ENCODE measurements at regions of chr13 and their contacts with region 1.

Region 1: DNA sequence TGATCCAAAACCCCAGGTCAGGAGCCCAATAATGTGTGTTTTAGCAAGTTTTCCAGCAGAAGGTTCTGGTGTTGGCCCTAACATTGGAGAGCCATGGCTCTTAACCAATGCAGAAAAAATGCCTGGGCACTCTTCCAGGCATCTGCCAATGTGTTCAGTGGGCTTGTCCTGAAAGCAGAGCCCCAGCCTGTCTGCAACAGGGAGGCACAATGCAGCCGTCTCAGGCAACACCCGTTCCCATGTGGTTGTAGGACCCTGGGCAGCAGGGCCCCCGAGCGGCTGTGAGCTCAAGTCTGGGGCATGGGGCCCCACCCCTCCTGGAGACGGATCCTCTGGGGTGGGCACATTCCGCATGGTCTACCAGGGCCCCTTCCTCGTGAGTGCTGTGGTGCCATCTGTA is 58.1 kb upstream of the SIAH3 start:
- DNase-seq: no peak
- ATAC-seq: no peak
- H3K4me3 ChIP-seq: no peak overlapping the region
- H3K27ac ChIP-seq: no peak overlapping the region
- H3K4me1 ChIP-seq: no peaks in the 10 kb centered on the region
- H3K27me3 ChIP-seq: peaks cover 0 to 8% (median 0%) of the 10 kb centered on the region in 9 donors
- CTCF ChIP-seq: no peak
- POLR2A ChIP-seq: no peak

Region 2: DNA sequence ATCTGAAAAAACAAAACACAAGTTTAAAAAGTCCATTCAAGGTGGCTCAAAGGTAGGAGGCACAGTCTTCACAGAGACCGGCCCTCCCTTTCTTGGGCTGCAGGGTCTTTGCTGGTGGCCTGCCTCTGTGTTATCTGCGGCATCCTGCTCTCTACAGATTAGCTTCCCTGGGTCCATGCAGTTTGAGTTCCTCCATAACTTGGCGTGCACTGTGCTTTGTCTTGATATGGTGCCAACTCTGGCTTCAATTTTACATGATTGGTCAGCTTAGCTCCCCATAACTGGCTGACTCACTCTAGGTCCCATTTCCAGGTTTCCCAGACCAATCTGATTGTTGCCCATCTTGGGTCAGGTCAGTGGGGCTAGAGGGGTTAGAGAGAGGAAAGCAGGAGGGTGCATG is 610.5 kb before region 1 on chr13:
- intact Hi-C with region 1: no loop called
- DNase-seq: no peak
- ATAC-seq: peak in 1 of 4 donors; percentile 14
- H3K4me3 ChIP-seq: no peak overlapping the region
- H3K27ac ChIP-seq: no peak overlapping the region
- H3K4me1 ChIP-seq: peaks cover 0 to 20% (median 1%) of the 10 kb centered on the region in 12 donors
- H3K27me3 ChIP-seq: no peaks in the 10 kb centered on the region
- CTCF ChIP-seq: no peak
- POLR2A ChIP-seq: no peak

Region 3: GRCh38 chr13:45833656-45834375 is 75.9 kb before region 1 on chr13:
- intact Hi-C with region 1: loop called in 1 of 10 experiments (anchors 2 kb)
- DNase-seq: peak in 4 of 5 donors; percentile 52 to 81 (median 59)
- ATAC-seq: peak; percentile 89 to 99 (median 96)
- H3K4me3 ChIP-seq: no peak overlapping the region
- H3K27ac ChIP-seq: no peak overlapping the region
- H3K4me1 ChIP-seq: peaks cover 0 to 11% (median 0%) of the 10 kb centered on the region in 12 donors
- H3K27me3 ChIP-seq: no peaks in the 10 kb centered on the region
- CTCF ChIP-seq: no peak
- POLR2A ChIP-seq: no peak

Region 4: GRCh38 chr13:45950386-45951000 is 40.8 kb after region 1 on chr13:
- intact Hi-C with region 1: no loop called
- DNase-seq: no peak
- ATAC-seq: peak; percentile 24 to 73 (median 46)
- H3K4me3 ChIP-seq: no peak overlapping the region
- H3K27ac ChIP-seq: peak overlapping the region in 4 of 12 donors; percentile 11 to 89 (median 24)
- H3K4me1 ChIP-seq: peaks cover 0 to 17% (median 0%) of the 10 kb centered on the region in 12 donors
- H3K27me3 ChIP-seq: no peaks in the 10 kb centered on the region
- CTCF ChIP-seq: no peak
- POLR2A ChIP-seq: no peak

Region 5: DNA sequence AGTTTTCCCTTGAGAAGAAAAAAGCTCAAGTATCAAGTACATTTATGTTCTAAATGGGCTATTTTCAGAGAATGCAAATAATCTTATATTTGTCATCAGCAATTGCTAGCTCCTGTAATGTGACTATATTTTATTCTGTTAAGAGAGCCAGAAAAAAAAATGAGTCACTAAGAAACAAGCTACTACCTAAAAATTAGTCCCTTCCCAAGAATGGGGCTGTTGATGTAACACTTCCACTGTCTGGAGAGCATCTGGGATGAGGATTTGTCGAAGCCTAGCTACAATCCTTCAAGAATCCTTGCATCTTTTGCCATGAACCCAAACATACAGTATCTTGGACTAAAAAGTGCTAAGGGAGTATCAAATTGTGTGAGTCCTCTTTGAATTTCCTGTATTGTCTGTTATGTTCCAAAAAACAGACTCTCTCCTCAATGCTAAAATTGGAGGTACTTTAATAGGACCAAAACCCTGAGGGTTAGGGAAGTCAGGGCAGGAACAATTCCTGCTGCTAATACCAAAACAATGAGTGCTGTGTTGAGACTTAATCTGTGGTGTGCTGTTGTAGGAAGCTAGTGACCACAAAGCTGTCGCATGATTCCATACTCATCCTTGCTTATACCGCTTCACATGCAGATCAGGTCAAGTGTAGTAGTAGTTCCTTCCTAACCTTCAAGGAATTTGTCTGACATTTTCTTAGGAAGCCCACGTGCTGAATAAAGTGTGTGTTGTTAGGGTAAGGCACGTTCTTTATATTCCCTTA is 147.8 kb after region 1 on chr13:
- intact Hi-C with region 1: no loop called
- DNase-seq: no peak
- ATAC-seq: no peak
- H3K4me3 ChIP-seq: no peak overlapping the region
- H3K27ac ChIP-seq: no peak overlapping the region
- H3K4me1 ChIP-seq: peaks cover 0 to 11% (median 6%) of the 10 kb centered on the region in 12 donors
- H3K27me3 ChIP-seq: no peaks in the 10 kb centered on the region
- CTCF ChIP-seq: no peak
- POLR2A ChIP-seq: no peak

Measured in heart left ventricle (tissue), 16 donors.